Activated naive CD4-positive, alpha-beta T cell treated with anti-CD3 and anti-CD28 coated beads, Interleukin-2, amount 10 ng/mL, durations not matched to agents 7 days and 5 days (primary cell): ENCODE measurements at regions of chr1 and their contacts with region 1.

Region 1: GRCh38 chr1:210951279-210951678 is 182.7 kb downstream of the KCNH1 start:
- DNase-seq: no peak
- H3K4me3 Mint-ChIP-seq: no peak overlapping the region
- H3K27ac Mint-ChIP-seq: no peak overlapping the region
- H3K4me1 Mint-ChIP-seq: no peaks in the 10 kb centered on the region
- H3K27me3 Mint-ChIP-seq: peaks cover 5% of the 10 kb centered on the region

Region 2: GRCh38 chr1:210584439-210585113 is 366.7 kb before region 1 on chr1:
- CTCF ChIA-PET with region 1: interaction called, 12 read pairs
- DNase-seq: peak; percentile 81
- H3K4me3 Mint-ChIP-seq: no peak overlapping the region
- H3K27ac Mint-ChIP-seq: no peak overlapping the region
- H3K4me1 Mint-ChIP-seq: peaks cover 6% of the 10 kb centered on the region
- H3K27me3 Mint-ChIP-seq: peaks cover 1% of the 10 kb centered on the region

Region 3: DNA sequence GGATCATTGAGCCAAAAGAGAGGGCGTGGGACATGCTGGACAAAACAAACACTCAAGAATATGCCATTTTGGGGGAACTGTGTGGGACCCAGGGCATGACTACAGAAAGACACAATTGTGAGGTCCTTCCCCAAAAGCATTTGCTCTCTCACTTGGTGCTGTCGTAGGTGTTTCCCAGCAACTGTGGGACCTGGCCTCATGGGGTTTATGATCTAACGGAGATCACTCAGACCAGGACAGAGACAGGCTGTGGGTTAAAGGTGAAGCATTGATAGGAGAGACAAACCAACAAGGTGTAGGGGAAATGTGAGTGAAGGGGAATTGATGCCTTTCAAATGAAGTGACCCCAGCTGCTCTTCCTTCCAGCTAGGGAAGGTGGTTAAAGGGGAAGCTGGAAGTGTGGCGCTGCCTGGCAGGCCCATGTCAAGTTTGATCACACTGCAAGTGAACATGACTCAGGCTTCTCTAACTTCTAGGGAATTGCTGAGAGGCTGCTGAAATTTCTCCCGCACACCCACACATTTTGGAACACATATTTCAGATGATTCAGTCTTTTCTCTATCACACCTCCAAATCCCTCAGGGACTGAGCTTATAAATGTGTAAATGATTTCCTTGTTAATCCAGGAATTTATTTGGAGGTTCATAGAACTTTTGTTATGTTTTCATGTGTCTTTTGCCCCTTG is 405.6 kb after region 1 on chr1:
- CTCF ChIA-PET with region 1: no interaction called
- DNase-seq: no peak
- H3K4me3 Mint-ChIP-seq: no peak overlapping the region
- H3K27ac Mint-ChIP-seq: no peak overlapping the region
- H3K4me1 Mint-ChIP-seq: peaks cover 42% of the 10 kb centered on the region
- H3K27me3 Mint-ChIP-seq: no peaks in the 10 kb centered on the region